H1 (cell line): ENCODE measurements at regions of chr6 and their contacts with region 1.

Region 1: GRCh38 chr6:148144917-148145521 is 197.6 kb upstream of the SASH1 start:
- DNase-seq: peak; percentile 31 to 83
- H3K4me3 ChIP-seq: no peak overlapping the region
- H3K27ac ChIP-seq: no peak overlapping the region
- H3K4me1 ChIP-seq: peaks cover 0 to 3% (median 0%) of the 10 kb centered on the region in 4 experiments; a peak in 1 of 7 replicates
- H3K27me3 ChIP-seq: no peaks in the 10 kb centered on the region
- CTCF ChIP-seq: peak; percentile 55 to 78 (median 73)
- EP300 ChIP-seq: no peak
- POLR2A ChIP-seq: no peak
- RAD21 ChIP-seq: peak; percentile 62 to 77

Region 2: GRCh38 chr6:148134592-148134991 is 10.4 kb before region 1 on chr6:
- CTCF ChIA-PET with region 1: interaction called, 29 read pairs
- POLR2A ChIA-PET with region 1: no interaction called
- DNase-seq: no peak
- H3K4me3 ChIP-seq: no peak overlapping the region
- H3K27ac ChIP-seq: no peak overlapping the region
- H3K4me1 ChIP-seq: no peaks in the 10 kb centered on the region
- H3K27me3 ChIP-seq: no peaks in the 10 kb centered on the region
- CTCF ChIP-seq: no peak
- EP300 ChIP-seq: no peak
- POLR2A ChIP-seq: no peak
- RAD21 ChIP-seq: no peak

Region 3: DNA sequence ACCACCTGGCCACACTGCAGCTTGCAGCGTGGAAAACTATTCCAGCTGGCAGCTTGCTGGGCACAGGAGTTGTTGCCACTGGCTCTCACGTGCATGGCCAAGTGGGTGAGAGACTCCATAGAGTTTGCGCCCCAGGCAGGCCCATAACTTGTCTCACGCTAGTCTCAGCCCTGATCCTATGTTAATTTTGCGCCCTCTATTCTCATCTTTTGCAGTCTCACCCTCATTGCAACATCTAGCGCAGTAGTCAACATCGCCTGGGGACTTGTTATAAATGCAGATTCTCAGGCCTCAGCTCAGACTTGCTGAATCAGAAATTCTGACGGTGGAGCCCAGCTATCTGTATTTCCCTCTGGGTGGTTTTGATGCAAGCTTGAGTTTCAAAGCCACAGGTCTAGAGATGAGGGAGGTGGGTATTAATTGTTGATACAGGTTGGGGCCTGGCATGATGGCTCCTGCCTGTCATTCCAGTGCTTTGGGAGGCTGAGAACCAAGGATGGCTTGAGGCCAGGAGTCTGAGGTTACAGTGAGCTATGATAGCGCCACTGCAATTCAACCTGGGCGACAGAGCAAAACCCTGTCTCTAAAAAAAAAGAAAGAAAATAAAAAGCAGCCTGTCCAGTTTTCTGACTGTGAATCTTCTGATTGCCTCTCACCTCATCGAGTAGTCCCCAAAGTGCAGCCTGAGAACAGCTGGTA is 12.7 kb after region 1 on chr6:
- CTCF ChIA-PET with region 1: interaction called, 11 read pairs
- POLR2A ChIA-PET with region 1: no interaction called
- DNase-seq: no peak
- H3K4me3 ChIP-seq: no peak overlapping the region
- H3K27ac ChIP-seq: no peak overlapping the region
- H3K4me1 ChIP-seq: no peaks in the 10 kb centered on the region; a peak in 1 of 7 replicates
- H3K27me3 ChIP-seq: no peaks in the 10 kb centered on the region
- CTCF ChIP-seq: no peak
- EP300 ChIP-seq: no peak
- POLR2A ChIP-seq: no peak
- RAD21 ChIP-seq: no peak

Region 4: GRCh38 chr6:148166339-148166968 is 21.4 kb after region 1 on chr6:
- CTCF ChIA-PET with region 1: interaction called, 43 read pairs
- POLR2A ChIA-PET with region 1: no interaction called
- DNase-seq: no peak
- H3K4me3 ChIP-seq: no peak overlapping the region
- H3K27ac ChIP-seq: no peak overlapping the region
- H3K4me1 ChIP-seq: no peaks in the 10 kb centered on the region; a peak in 1 of 7 replicates
- H3K27me3 ChIP-seq: no peaks in the 10 kb centered on the region
- CTCF ChIP-seq: peak in 2 of 3 experiments; percentile 40 to 56; a peak in 2 of 4 replicates
- EP300 ChIP-seq: no peak
- POLR2A ChIP-seq: no peak
- RAD21 ChIP-seq: peak; percentile 78 to 81